Left lung (tissue), 14 donors: ENCODE measurements at regions of chr13 and their contacts with region 1.

Region 1: GRCh38 chr13:26485786-26486185 is 71.7 kb upstream of the WASF3 start:
- DNase-seq: no peak
- ATAC-seq: no peak
- H3K4me3 ChIP-seq: no peak overlapping the region
- H3K27ac ChIP-seq: no peak overlapping the region
- H3K4me1 ChIP-seq: peaks cover 0 to 4% of the 10 kb centered on the region in 2 donors
- H3K27me3 ChIP-seq: peaks cover 0 to 6% of the 10 kb centered on the region in 2 donors
- CTCF ChIP-seq: no peak

Region 2: GRCh38 chr13:26698392-26699196 is 212.8 kb after region 1 on chr13:
- intact Hi-C with region 1: loop called in 1 of 2 experiments (anchors 5 kb)
- DNase-seq: peak; percentile 74 to 89 (median 82)
- ATAC-seq: peak; percentile 98
- H3K4me3 ChIP-seq: no peak overlapping the region
- H3K27ac ChIP-seq: no peak overlapping the region
- H3K4me1 ChIP-seq: peaks cover 0 to 7% of the 10 kb centered on the region in 2 donors
- H3K27me3 ChIP-seq: peaks cover 0 to 5% of the 10 kb centered on the region in 2 donors
- CTCF ChIP-seq: peak; percentile 93 to 99